OCI-LY7 (cell line): ENCODE measurements at regions of chr17 and their contacts with region 1.

Region 1: GRCh38 chr17:64920026-64920418 is 744 bp upstream of the LRRC37A3 start:
- DNase-seq: no peak
- H3K4me3 ChIP-seq: peak overlapping the region; percentile 68
- H3K27ac ChIP-seq: peak overlapping the region; percentile 77
- H3K4me1 ChIP-seq: peaks cover 46% of the 10 kb centered on the region
- CTCF ChIP-seq: no peak

Region 2: DNA sequence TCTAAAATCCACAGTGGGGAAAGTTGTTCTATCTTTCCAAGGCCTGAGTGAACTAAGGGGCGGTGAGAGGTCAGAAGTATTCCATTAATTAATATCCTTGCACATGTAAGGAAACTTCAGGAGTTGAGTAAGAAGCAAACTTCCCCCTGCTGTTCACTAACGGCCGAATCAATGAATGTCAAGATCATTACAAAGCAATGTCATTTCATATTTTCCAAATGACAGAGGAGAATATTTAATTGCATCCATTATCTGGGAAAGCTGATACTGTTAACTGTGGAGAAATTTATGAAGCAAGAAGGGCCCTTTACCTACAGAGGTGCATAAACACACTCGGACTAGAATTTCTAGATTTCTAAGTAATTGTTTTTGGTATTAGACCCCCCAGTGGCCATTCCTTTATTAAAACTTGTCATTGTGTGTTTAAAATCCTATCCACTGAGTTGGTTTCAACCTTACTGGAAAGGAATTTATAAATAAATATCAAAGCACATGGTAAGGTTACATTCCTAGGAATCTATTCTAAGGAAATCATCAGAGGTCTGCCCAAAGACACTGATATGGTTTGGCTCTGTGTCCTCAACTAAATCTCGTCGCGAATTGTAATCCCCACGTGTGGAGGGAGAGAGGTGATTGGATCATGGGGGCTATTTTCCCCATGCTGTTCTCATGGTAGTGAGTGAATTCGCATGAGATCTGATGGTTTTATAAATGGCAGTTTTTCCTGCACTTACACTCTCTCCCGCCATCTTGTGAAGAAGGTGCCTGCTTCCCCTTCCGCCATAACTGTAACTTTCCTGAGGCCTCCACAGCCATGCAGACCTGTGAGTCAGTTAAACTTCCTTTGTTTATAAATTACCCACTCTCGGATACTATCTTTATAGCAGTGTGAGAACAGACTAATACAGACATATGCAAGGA is 237.5 kb before region 1 on chr17:
- CTCF ChIA-PET with region 1: no interaction called
- POLR2A ChIA-PET with region 1: no interaction called
- intact Hi-C with region 1: no loop called
- DNase-seq: no peak
- H3K4me3 ChIP-seq: no peak overlapping the region
- H3K27ac ChIP-seq: no peak overlapping the region
- H3K4me1 ChIP-seq: no peaks in the 10 kb centered on the region
- CTCF ChIP-seq: 0 out of 2 replicates have a peak, but pooled peaks have one; percentile 11

Region 3: DNA sequence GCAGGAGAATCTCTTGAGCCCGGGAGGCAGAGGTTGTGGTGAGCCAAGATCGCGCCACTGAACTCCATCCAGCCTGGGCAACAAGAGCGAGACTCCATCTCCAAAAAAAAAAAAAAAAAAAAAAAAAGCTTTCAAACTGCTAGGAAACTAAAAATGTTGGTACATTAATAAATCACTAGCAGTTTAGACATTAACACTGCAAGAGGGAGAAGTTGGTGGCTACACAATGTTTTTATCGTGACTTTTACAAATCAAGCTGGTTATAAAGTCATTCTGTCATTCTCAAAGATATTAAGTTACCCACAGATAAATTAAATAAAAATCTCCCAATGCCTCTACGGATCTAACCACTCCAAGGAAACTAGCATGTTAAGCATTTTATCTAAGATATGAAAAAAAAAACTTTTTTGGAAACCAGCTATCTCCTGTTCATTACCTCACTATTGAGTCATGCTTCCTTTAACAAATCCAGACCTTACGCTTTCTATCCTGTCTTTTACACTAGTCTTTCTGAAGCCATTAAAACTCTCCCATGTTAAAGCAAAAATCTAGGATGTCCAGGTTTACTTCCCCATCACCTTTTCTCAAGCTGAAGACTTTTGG is 172.0 kb before region 1 on chr17:
- CTCF ChIA-PET with region 1: no interaction called
- POLR2A ChIA-PET with region 1: no interaction called
- intact Hi-C with region 1: no loop called
- DNase-seq: no peak
- H3K4me3 ChIP-seq: no peak overlapping the region
- H3K27ac ChIP-seq: no peak overlapping the region
- H3K4me1 ChIP-seq: no peaks in the 10 kb centered on the region
- CTCF ChIP-seq: no peak

Region 4: DNA sequence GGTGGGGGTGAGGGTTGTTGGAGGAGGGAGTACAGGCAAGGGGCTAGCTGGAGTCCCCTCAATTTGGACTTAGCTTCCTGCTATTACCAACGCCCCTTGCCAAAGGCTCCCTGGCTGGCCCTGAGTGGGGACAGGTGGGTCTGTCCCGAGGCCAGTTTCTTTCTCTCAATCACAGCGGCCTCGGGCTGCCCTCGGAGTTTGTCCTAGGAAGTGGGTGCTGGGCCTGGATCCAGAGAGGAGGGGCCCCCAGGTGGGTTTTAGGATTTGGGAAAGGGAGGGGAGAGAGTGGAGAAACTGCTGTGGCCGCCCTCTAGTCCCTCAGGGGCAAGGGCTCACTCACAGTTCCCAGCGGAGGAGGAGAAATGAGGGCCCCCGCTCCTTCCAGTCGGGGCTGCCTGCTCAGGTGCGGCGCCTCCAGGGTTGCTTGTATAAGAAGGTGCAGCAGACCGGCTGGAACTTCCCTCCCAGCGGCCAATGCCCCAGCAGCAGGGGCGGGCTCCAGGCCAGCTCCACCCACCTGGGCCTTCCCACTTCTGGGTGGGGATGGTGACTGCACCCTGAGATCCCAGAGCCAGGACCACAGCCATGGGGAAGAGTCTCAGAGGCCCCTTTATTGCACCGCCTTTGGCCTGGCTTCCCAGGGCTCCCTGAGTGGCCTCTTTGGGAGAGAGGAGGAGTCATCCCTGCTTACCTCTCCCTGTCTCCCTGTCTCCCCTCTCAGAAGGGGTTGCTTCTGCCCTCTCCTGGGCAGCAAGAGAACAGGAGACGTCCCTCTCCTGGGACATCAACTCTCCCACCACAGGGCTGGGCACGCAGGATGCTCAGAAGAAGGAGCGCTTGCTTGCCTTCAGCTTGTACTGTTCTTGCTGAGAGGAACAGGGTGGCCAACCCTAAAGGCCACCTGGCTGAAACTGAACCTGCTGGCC is 145.9 kb before region 1 on chr17:
- CTCF ChIA-PET with region 1: no interaction called
- POLR2A ChIA-PET with region 1: no interaction called
- intact Hi-C with region 1: loop called (anchors 2 kb)
- DNase-seq: peak; percentile 70
- H3K4me3 ChIP-seq: peak overlapping the region; percentile 60
- H3K27ac ChIP-seq: no peak overlapping the region
- H3K4me1 ChIP-seq: peaks cover 49% of the 10 kb centered on the region
- CTCF ChIP-seq: peak; percentile 68

Region 5: DNA sequence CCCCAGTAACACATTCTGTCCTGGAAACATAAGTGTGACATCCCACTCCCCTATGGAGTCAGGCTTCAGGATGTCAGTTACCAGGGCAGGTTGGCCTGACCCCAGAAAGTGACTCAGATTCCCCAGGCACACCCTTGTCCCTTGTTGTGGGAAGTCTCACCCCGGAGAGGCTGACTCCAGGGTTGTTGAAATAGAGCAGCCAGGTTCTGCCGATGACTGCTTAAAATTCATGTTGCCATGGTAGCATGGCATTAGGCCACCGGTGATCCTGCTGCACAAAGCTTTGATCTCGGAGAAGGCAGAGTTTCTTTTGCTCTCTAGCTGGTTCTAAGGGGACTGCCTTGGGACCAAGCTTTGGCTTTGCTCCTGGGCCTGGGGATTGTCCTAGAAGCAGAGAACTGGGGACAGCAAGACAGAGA is 323.8 kb after region 1 on chr17:
- CTCF ChIA-PET with region 1: no interaction called
- POLR2A ChIA-PET with region 1: no interaction called
- intact Hi-C with region 1: no loop called
- DNase-seq: no peak
- H3K4me3 ChIP-seq: no peak overlapping the region
- H3K27ac ChIP-seq: no peak overlapping the region
- H3K4me1 ChIP-seq: no peaks in the 10 kb centered on the region
- CTCF ChIP-seq: no peak

Region 6: DNA sequence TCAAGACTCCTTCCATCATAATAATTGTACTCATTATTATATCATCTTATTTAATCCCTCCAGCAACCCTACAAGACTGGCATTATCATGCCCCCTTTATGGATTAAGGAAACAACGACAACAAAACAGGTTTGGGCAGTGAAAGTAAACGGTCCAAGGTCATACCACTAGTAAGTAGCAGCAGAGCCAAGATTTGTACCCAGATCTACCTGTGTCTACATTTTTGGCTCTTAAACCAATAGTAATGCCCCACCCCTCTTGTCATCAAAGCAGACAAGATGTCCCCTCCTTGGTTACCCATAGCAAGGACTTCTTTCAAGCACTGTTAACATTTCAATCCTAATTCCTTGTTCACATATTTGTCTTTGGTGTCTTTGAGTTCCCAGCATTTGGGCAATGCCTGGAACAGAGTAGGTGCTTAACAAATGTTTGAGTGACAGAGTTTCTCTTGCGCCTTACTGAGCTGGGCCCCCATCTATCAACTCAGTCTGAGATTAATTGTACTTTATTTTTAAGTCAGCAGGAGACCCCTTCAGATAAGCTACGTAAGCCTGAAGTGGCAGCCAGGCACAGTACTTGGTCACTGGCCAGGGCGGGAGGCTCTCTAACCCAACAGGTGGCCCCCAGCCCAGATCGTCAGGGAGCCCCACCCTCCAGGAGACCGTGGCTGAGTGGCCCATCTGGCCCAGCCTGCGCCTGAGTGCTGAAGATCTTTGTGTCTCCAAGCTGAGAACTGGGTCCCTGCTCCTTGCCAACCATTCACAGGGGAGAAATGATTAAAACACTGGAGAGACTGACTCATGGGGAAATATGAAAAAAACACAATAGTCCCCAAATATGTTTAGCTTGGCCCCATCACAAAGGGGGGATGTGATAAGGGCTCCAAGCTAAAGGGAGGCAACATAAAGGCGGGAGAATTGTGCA is 565.6 kb after region 1 on chr17:
- CTCF ChIA-PET with region 1: no interaction called
- POLR2A ChIA-PET with region 1: no interaction called
- intact Hi-C with region 1: no loop called
- DNase-seq: no peak
- H3K4me3 ChIP-seq: no peak overlapping the region
- H3K27ac ChIP-seq: no peak overlapping the region
- H3K4me1 ChIP-seq: no peaks in the 10 kb centered on the region
- CTCF ChIP-seq: no peak